PC-3 (cell line): ENCODE measurements at regions of chr5 and their contacts with region 1.

Region 1: DNA sequence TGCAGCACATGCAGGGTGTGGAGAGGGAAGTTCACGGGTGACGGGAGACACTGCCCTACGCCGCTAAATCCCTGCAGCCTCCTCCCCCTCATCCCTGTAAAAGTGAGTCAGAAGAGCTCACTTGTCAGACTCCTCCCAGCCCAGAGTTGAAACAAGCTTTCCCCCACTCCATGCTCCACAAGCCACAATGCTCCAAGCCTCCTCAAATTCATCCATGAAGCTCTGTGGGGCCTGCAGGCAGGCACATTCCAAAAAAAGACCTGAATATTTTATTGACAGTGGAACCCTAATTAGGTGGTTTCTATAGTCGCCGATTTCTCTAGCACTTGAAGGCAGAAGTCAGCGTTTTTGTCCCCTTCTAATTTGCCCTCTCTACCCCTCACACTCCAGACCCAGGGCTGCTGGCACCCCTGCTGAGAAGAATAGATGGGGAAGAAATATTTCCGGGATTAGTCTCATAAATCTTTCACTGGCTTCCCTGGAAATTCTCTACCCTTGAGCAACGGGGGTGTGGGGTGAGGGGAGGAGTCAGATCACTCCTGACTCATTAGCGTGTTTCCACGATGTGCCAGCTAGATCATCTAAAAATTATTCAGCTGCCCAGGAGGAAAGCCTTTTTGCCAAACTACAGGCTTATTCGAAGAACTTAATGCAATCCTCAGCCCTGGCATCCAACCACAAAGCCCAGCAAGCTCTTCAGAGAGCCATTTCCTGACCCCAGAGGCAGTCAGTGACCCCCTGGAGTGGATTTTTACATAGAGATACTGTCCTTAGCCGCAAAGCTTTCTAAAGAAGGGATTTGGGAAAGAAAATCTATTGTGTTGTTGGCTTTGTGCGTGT is 97.2 kb downstream of the ENC1 start:
- DNase-seq: peak; percentile 92
- ATAC-seq: peak; percentile 85
- H3K4me3 ChIP-seq: peak overlapping the region; percentile 49
- H3K27ac ChIP-seq: peak overlapping the region; percentile 94
- H3K4me1 ChIP-seq: peaks cover 52% of the 10 kb centered on the region
- H3K27me3 ChIP-seq: no peaks in the 10 kb centered on the region
- CTCF ChIP-seq: no peak

Region 2: GRCh38 chr5:74310386-74310785 is 233.0 kb before region 1 on chr5:
- CTCF ChIA-PET with region 1: no interaction called
- POLR2A ChIA-PET with region 1: no interaction called
- intact Hi-C with region 1: no loop called
- DNase-seq: peak; percentile 50
- ATAC-seq: peak; percentile 48
- H3K4me3 ChIP-seq: no peak overlapping the region
- H3K27ac ChIP-seq: no peak overlapping the region
- H3K4me1 ChIP-seq: peaks cover 20% of the 10 kb centered on the region
- H3K27me3 ChIP-seq: no peaks in the 10 kb centered on the region
- CTCF ChIP-seq: no peak

Region 3: DNA sequence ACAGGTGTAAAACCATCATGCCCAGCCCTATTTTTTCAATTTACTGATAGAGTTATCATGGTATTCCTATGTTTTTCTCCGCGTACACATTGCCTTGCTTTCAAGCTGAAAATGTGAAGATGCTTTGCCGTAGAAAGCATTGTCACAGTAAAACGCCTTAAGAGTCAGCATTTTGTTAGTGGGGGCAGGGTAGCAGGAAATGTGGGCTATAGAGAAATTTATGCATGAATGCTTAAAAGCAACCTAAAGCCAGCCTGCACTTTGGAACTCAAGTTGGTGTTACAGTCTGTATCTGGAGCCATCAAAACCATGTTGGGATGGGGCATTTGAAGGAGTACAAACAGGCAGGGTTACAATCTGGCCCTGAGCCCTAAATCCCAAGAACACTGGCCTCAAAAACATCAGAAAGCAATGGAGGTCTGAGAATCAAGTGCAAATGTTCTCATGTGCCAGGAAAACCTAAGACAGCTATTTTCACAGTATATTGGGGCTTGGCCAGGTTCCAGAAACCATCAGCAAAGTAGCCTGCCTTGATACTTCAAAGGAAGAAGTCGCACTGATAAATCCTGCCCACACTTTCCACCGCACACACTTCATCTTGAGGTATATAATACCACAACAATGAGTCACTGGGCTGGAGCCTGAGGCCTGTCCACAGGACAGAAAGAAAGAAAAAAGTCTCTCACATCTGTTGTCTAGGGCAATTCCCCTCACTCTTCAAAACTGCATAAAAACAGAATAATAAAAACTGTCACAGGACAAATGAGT is 216.6 kb before region 1 on chr5:
- CTCF ChIA-PET with region 1: no interaction called
- POLR2A ChIA-PET with region 1: no interaction called
- intact Hi-C with region 1: loop called (anchors 5 kb)
- DNase-seq: peak; percentile 92
- ATAC-seq: peak; percentile 74
- H3K4me3 ChIP-seq: no peak overlapping the region; the same call in 1 of the 2 replicates
- H3K27ac ChIP-seq: peak overlapping the region; percentile 70
- H3K4me1 ChIP-seq: peaks cover 27% of the 10 kb centered on the region
- H3K27me3 ChIP-seq: no peaks in the 10 kb centered on the region
- CTCF ChIP-seq: no peak

Region 4: DNA sequence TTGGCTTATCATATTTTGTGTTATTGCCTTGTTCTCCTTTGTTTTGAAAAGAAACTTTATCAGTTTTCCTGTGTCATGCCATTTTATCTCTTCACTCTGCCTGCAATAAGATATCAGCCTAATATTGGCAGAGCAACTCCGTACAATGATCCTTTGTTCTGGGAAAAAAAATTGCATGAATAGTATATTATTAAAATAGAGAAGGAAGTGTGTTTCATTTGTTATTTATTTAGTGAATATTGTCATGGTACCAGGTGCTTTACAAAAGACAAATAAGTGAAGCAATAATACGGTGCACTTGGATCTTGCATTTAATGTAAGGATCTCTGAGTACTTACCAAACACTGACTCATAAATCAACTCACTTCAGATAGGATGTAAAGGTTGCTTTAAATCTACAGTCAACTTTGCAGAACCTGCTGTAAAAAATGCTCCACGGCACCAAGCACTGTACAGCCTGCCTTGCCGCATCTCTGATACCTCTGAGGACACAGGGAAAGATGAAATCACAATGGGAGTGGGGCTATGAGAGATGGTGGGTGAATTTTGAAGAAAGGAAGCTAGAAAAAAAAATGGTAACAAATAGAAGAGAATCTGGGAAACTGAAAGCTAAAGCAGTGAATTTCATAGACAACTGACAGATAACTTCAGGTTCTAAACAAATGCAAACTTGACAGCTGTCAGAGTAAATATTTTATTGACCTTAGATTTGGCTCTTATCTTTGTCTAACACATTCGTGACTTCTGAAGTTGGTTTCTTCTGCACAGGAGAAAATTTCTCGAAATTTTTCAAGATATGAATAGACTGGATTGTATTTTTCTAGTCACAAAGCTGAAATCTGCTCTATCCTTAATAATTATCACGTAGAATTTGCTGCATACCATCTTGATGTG is 135.0 kb before region 1 on chr5:
- CTCF ChIA-PET with region 1: no interaction called
- POLR2A ChIA-PET with region 1: no interaction called
- intact Hi-C with region 1: loop called (anchors 5 kb)
- DNase-seq: peak; percentile 88
- ATAC-seq: peak; percentile 98
- H3K4me3 ChIP-seq: peak overlapping the region; percentile 36; the same call in 1 of the 2 replicates
- H3K27ac ChIP-seq: peak overlapping the region; percentile 58
- H3K4me1 ChIP-seq: peaks cover 18% of the 10 kb centered on the region
- H3K27me3 ChIP-seq: no peaks in the 10 kb centered on the region
- CTCF ChIP-seq: no peak